ENCODE measurements at regions of chr16 and their contacts with region 1.

Region 1: GRCh38 chr16:11407047-11407982 is 62.1 kb downstream of the RMI2 start:
- DNase-seq: no peak
- H3K4me3 ChIP-seq: no peak overlapping the region
- CTCF ChIP-seq: peak; percentile 73

Region 2: DNA sequence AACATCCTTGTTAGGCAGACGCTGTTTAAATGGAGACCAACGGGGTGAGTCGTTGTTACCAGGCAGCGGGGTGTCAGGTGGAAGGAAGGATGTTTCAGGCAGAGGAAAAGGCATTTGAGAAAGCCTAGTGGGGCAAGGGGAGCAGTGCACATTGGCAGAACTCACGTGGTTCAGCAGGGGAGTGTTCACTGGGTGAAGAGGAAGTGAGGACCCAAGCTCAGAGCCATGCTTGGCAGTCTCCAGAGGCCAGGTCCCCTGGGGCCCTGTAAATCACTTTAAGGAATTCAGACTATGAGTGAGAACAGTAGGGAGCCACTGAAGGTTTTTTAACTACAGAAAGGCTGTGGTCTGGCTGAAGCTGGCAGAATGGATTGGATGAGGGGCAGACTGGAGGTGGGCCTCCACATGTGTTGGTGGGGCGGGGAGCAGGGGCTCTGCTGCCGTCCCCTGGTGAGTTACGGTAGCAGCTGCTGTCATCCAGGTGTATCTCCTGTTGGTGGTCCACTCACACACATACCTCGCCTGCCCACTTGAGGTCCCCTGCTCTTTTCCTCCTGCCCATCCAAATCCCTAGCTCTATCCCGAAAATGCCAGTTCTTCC is 457.8 kb before region 1 on chr16:
- CTCF ChIA-PET with region 1: interaction called, 21 read pairs
- POLR2A ChIA-PET with region 1: no interaction called
- DNase-seq: no peak
- H3K4me3 ChIP-seq: no peak overlapping the region
- CTCF ChIP-seq: no peak

Region 3: DNA sequence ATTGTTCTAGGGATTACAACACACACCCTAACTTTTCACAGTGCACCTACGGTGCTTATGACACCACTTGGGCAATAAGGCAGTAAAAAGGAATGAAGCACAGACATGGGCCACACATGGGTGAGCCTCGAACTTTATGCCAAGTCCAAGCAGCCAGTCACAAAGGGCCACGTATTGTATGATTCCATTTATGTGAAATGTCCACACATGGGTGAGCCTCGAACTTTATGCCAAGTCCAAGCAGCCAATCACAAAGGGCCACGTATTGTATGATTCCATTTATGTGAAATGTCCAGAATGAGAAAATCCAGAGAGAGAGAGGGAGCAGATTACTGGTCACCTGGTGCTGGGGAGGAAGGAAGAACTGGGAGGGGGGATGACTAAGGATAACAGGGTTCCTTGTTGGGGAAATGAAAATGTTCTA is 39.8 kb before region 1 on chr16:
- CTCF ChIA-PET with region 1: no interaction called
- POLR2A ChIA-PET with region 1: no interaction called
- DNase-seq: no peak
- H3K4me3 ChIP-seq: no peak overlapping the region
- CTCF ChIP-seq: no peak

Region 4: GRCh38 chr16:11386791-11387546 is 20.3 kb before region 1 on chr16:
- CTCF ChIA-PET with region 1: interaction called, 241 read pairs
- POLR2A ChIA-PET with region 1: no interaction called
- DNase-seq: no peak
- H3K4me3 ChIP-seq: no peak overlapping the region
- CTCF ChIP-seq: peak; percentile 75

Region 5: GRCh38 chr16:11417487-11417886 is 10.2 kb after region 1 on chr16:
- CTCF ChIA-PET with region 1: interaction called, 38 read pairs
- POLR2A ChIA-PET with region 1: no interaction called
- DNase-seq: no peak
- H3K4me3 ChIP-seq: no peak overlapping the region
- CTCF ChIP-seq: no peak

Region 6: DNA sequence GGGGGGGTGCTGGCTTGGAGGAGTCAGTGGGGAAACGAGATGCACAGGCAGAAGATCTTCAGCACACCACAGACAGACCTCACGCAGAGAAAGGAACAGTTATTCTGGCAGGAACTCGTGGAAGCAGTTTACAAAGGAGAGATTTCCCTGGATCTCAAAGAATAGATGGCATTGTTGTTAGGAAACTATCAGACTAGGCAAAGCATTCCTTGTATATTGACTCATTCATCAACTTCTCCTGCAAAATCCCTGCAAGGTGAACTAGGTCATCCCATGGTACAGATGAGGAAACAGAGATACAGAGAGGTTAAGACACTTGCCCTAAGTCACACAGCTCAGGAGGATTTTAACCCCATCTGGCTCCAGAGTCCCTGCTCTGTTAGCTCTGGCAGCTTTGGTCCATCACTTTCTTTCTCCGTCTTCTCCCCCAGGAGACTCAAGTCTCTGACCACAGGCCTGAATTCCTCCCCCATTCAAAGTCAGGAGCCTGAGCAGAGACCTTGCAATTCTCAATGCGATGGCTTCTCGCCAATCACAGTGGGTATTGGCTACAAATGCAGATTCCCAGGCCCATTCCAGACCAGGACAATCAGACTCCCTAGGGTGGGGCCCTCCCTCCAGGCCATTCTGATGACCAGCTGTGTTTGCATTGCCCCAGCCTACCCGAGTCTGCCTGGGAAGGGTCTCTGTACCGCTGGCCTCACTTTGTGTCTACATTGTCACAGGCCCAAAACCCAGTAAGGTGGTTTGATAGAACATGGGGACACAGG is 123.0 kb after region 1 on chr16:
- CTCF ChIA-PET with region 1: interaction called, 31 read pairs
- POLR2A ChIA-PET with region 1: no interaction called
- DNase-seq: no peak
- H3K4me3 ChIP-seq: no peak overlapping the region
- CTCF ChIP-seq: no peak

Region 7: DNA sequence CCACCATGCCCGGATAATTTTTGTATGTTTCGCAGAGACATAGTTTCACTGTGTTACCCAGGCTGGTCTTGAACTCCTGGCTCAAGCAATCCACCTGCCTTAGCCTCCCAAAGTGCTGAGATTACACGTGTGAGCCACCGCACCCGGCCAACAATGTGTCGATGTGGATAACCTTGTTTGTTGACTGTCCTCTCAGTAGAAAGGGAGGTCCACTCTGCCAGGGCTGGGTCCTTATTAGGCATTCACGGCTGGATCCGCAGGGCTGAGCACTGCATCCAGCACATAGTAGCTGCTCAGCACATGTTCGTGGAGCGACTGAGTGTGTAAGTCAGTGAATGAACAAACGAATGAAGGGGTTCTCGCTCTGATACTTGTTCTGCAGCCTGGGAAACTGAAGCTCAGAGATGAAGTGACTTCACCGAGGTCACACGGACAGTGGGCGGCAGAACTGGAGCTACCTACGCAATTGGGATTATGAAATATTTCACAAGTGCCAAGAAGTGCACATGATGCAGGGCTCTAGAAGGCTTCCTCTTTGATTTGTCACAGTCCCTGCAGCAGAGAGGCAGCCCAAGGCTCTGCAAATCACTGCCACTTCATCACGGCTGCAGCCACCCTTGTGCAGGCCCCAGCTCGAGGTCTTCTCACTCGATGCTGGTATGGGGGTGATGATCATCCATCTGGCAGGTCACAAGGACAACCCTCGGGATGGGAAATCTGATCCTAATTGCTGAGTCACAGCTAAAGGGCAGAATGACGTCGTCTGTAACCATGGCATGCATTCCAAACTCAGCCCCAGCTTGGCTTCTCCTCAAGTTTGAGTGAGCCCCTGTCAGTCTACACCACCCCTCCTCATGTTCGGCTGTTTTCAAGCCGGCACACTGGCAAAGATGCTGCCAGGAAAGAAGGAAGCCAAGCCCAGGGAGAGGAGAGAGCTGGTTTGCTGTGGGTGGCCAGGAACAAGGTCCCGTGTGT is 232.9 kb after region 1 on chr16:
- CTCF ChIA-PET with region 1: interaction called, 59 read pairs
- POLR2A ChIA-PET with region 1: no interaction called
- DNase-seq: peak; percentile 97
- H3K4me3 ChIP-seq: no peak overlapping the region
- CTCF ChIP-seq: no peak